Activated CD8-positive, alpha-beta T cell treated with anti-CD3 and anti-CD28 coated beads for 36 hours (primary cell): ENCODE measurements at regions of chr1 and their contacts with region 1.

Region 1: DNA sequence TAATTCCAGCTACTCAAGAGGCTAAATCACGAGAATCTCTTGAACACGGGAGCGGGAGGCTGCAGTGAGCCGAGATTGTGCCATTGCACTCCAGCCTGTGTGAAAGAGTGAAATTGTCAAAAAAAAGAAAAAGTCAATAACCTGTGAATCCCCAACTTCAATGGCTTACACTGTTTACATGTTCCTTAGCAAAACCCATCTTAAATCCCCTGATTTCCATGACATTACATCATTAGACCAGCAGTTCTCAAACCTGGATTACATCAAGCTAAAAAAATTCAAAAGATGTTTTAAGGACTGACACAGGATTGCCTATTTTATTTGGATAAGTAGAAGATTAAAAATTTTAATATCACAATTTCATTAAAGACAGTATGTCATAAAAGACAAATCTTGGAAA is 12.4 kb downstream of the GPBP1L1 start:
- DNase-seq: no peak
- ATAC-seq: no peak
- H3K4me3 Mint-ChIP-seq: no peak overlapping the region
- H3K27ac Mint-ChIP-seq: no peak overlapping the region
- H3K4me1 Mint-ChIP-seq: peaks cover 61% of the 10 kb centered on the region
- H3K27me3 Mint-ChIP-seq: no peaks in the 10 kb centered on the region
- CTCF ChIP-seq: no peak

Region 2: DNA sequence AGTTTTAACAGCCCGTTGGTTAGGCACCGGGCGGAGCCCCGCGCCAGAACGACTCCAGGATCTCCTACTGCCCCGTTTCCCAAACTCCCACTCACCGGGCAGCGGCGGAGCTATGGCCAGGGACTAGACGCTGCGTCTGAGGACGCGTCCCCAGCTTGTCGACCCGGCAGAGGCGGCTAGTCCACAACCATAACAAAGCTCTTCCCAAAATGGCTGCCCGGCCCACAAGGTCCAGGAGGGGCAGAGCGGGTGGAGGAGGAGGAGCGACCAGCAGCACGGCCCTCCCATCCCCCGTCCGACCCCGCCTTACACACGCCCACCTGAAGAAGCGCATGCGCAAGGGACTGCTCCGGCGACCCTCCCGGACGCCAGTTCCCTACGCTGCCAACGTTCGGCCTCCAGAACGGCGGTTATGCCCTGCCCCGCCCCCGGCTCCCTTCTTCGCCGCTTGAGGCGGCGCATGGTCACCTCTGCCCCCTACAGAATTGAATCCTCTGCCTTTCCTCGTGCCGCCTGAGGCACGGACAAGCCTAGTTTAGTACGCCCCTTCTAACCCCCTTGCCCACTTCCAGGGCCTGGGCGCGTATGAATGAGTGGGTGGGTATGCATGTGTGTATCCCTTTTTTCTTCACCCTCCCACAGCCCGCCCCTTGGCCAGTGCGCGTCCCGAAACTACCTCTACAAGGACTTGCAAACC is 12.5 kb after region 1 on chr1 and contains the start of gene GPBP1L1:
- CTCF ChIA-PET with region 1: interaction called, 8 read pairs
- POLR2A ChIA-PET with region 1: interaction called, 12 read pairs
- intact Hi-C with region 1: no loop called
- DNase-seq: peak; percentile 98
- ATAC-seq: peak; percentile 78
- H3K4me3 Mint-ChIP-seq: peak within 1 kb of the TSS; percentile 91
- H3K27ac Mint-ChIP-seq: peak within 1 kb of the TSS; percentile 95
- H3K4me1 Mint-ChIP-seq: peaks cover 37% of the 10 kb centered on the region
- H3K27me3 Mint-ChIP-seq: no peaks in the 10 kb centered on the region
- CTCF ChIP-seq: no peak
- total RNA-seq, gene GPBP1L1: 95.7 to 105 TPM

Region 3: GRCh38 chr1:45746922-45747321 is 73.0 kb after region 1 on chr1:
- CTCF ChIA-PET with region 1: no interaction called
- POLR2A ChIA-PET with region 1: no interaction called
- intact Hi-C with region 1: no loop called
- DNase-seq: no peak
- ATAC-seq: no peak
- H3K4me3 Mint-ChIP-seq: no peak overlapping the region
- H3K27ac Mint-ChIP-seq: peak overlapping the region; percentile 15
- H3K4me1 Mint-ChIP-seq: peaks cover 19% of the 10 kb centered on the region
- H3K27me3 Mint-ChIP-seq: no peaks in the 10 kb centered on the region
- CTCF ChIP-seq: no peak